Caco-2 (cell line): ENCODE measurements at regions of chr12 and their contacts with region 1.

Region 1: GRCh38 chr12:6752921-6753771 is at the start of gene MLF2:
- DNase-seq: peak; percentile 99 to 100
- H3K4me3 ChIP-seq: peak within 1 kb of the TSS; percentile 97
- H3K4me3 Mint-ChIP-seq: peak within 1 kb of the TSS; percentile 90
- H3K27ac Mint-ChIP-seq: peak within 1 kb of the TSS; percentile 94
- H3K4me1 ChIP-seq: peaks cover 16% of the 10 kb centered on the region
- H3K4me1 Mint-ChIP-seq: peaks cover 11% of the 10 kb centered on the region
- H3K27me3 ChIP-seq: no peaks in the 10 kb centered on the region
- H3K27me3 Mint-ChIP-seq: no peaks in the 10 kb centered on the region
- CTCF ChIP-seq: peak; percentile 99
- total RNA-seq, gene MLF2: 303 and 309 TPM in 2 replicates

Region 2: GRCh38 chr12:6723607-6724396 is 29.3 kb before region 1 on chr12 and contains the start of gene COPS7A:
- CTCF ChIA-PET with region 1: interaction called, 44 read pairs
- POLR2A ChIA-PET with region 1: interaction called, 60 read pairs
- intact Hi-C with region 1: loop called (anchors 1 kb)
- DNase-seq: peak; percentile 100
- H3K4me3 ChIP-seq: peak within 1 kb of the TSS; percentile 63
- H3K4me3 Mint-ChIP-seq: peak within 1 kb of the TSS; percentile 73
- H3K27ac Mint-ChIP-seq: peak within 1 kb of the TSS; percentile 80
- H3K4me1 ChIP-seq: peaks cover 11% of the 10 kb centered on the region; the same call in 1 of the 2 replicates
- H3K4me1 Mint-ChIP-seq: peaks cover 11% of the 10 kb centered on the region
- H3K27me3 ChIP-seq: no peaks in the 10 kb centered on the region
- H3K27me3 Mint-ChIP-seq: no peaks in the 10 kb centered on the region
- CTCF ChIP-seq: no peak
- total RNA-seq, gene COPS7A: 56.8 and 61.9 TPM in 2 replicates

Region 3: GRCh38 chr12:6764011-6764828 is 11.1 kb after region 1 on chr12:
- CTCF ChIA-PET with region 1: interaction called, 135 read pairs
- POLR2A ChIA-PET with region 1: interaction called, 42 read pairs
- intact Hi-C with region 1: loop called (anchors 1 kb)
- DNase-seq: peak; percentile 89 to 95
- H3K4me3 ChIP-seq: peak overlapping the region; percentile 10; the same call in 1 of the 2 replicates
- H3K4me3 Mint-ChIP-seq: peak overlapping the region; percentile 71
- H3K27ac Mint-ChIP-seq: peak overlapping the region; percentile 79
- H3K4me1 ChIP-seq: peaks cover 54% of the 10 kb centered on the region
- H3K4me1 Mint-ChIP-seq: peaks cover 53% of the 10 kb centered on the region
- H3K27me3 ChIP-seq: no peaks in the 10 kb centered on the region
- H3K27me3 Mint-ChIP-seq: no peaks in the 10 kb centered on the region
- CTCF ChIP-seq: no peak

Region 4: DNA sequence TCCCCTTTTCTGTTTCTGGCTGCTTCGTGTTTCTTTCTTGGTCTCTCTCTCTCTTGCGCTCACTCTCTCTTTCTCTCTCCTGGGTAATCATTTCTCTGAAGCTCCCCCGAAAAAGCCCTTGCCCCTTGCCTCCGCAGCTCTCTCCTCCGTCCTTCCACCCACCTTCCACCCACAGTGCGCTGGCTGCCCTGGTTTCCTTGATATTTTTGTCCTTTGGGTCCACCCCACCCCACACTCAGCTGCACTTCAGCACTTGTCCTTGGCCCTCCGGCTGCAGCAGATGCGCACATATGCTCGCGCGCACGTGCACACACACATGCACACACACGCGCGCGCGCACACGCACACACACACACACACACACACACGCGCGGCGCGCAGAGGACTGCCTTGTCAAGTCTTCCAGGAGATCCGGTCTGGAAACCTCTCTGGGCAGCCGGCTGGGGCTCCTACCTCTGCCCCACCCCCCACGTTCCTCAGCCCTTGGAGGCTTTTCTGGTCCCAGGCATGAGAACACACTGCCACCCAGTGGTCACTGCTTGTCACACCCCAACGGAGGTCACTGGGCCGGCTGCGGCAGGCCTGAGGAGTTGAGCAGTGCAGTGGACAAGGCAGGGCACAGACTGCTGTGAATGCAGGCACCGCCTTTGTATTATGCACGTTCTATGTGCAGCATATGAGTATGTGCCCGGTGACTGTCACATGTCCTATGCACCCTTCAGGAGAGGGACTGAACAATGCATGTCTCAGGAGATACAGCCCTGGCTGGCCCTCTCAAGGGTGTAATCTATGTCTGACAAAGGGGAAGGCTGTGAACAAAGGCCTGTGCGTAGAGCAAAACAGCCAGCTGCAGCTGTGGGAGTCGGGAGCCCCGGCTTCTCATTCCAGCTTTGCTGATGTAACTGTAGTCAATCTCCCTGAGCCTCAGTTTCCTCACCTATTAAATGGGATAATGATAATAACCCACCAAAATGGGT is 25.7 kb after region 1 on chr12:
- CTCF ChIA-PET with region 1: interaction called, 51 read pairs
- POLR2A ChIA-PET with region 1: interaction called, 20 read pairs
- intact Hi-C with region 1: loop called (anchors 1 kb)
- DNase-seq: peak; percentile 98 to 99
- H3K4me3 ChIP-seq: peak overlapping the region; percentile 44
- H3K4me3 Mint-ChIP-seq: peak overlapping the region; percentile 81
- H3K27ac Mint-ChIP-seq: peak overlapping the region; percentile 58
- H3K4me1 ChIP-seq: peaks cover 31% of the 10 kb centered on the region
- H3K4me1 Mint-ChIP-seq: peaks cover 43% of the 10 kb centered on the region
- H3K27me3 ChIP-seq: no peaks in the 10 kb centered on the region
- H3K27me3 Mint-ChIP-seq: no peaks in the 10 kb centered on the region
- CTCF ChIP-seq: peak; percentile 99

Region 5: DNA sequence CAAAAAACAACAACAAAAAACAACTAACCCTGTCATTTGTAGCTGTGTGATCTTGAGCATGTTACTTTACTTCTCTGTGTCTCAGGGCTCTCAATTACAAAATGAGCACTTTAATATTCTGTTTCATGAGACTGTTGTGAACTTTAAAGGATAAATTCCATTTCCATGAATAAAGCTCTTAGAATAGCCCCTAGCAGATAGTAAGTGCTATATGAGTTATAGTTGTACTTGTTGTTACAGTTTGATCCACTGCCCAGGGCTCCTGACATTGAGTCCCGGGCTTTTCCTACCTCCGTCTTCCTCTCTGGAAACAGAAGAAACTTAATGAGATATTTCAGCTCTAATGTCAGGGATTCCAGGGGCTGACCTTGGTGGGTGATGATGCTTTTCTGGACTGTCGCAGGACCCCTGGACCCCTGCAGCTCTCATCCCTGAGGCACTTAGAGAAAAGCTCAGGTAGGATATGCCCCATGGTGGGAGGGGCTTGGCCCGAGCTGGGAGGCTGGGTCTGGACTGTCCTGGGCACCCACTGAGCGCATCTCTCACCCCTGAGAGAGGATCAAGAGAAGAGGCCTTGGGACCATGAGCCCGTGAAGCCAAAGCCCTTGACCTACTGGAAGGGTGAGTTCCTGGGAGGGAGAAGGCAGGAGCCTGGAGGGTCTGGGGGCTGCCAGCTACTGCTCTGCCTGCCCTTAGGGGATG is 80.2 kb after region 1 on chr12:
- CTCF ChIA-PET with region 1: interaction called, 35 read pairs
- POLR2A ChIA-PET with region 1: no interaction called
- intact Hi-C with region 1: loop called (anchors 2 kb)
- DNase-seq: no peak
- H3K4me3 ChIP-seq: no peak overlapping the region
- H3K4me3 Mint-ChIP-seq: no peak overlapping the region
- H3K27ac Mint-ChIP-seq: no peak overlapping the region
- H3K4me1 ChIP-seq: peaks cover 14% of the 10 kb centered on the region
- H3K4me1 Mint-ChIP-seq: peaks cover 21% of the 10 kb centered on the region
- H3K27me3 ChIP-seq: no peaks in the 10 kb centered on the region; the same call in 1 of the 2 replicates
- H3K27me3 Mint-ChIP-seq: no peaks in the 10 kb centered on the region
- CTCF ChIP-seq: no peak

Region 6: DNA sequence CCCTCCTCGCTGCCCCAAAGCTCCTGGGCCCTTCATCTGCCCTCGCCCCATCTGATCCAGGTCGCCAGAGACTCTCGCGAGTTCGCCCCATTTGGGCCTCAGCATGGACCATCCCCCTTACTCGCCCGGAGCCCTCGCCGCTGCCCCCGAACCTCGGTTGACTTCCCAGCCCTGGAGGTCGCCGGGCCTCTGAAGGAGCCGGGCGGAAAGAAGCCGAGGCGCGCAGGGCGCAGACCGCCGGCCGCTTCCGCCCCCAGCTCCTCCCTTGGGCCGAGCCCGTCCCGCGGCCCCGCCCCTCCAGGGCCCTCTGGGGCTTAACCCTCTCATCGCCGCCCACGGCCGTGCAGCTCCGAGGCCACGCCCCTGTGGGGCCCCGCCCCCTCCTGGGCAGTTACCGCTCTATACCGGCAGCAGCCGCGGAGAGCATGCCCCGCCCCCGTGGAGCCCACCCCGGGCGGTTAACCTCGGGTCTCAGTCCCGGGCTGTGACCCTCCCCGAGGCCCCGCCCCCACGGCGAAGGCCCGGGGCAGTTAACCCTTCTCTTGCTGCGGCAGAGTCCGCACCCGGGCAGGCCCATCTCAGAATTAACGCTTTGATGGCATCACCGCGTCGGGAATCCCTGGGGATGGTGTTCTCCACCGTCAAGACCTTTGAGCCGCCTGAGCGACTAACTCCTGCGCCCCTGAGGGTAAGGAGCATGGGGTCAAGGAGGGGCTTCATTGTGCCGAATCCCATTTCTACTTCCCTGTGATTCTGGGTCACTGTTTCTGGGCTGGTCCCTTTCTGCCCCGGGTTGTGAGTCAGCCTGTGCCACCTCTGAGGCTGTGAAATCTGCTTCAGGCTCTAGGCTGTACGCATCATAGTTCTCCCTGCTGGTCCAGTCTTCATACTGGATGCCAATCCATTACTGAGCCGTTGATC is 120.2 kb after region 1 on chr12 and contains the start of gene SPSB2:
- CTCF ChIA-PET with region 1: interaction called, 11 read pairs
- POLR2A ChIA-PET with region 1: interaction called, 3 read pairs
- intact Hi-C with region 1: no loop called
- DNase-seq: peak; percentile 100
- H3K4me3 ChIP-seq: peak within 1 kb of the TSS; percentile 89
- H3K4me3 Mint-ChIP-seq: peak within 1 kb of the TSS; percentile 98
- H3K27ac Mint-ChIP-seq: peak within 1 kb of the TSS; percentile 95
- H3K4me1 ChIP-seq: peaks cover 26% of the 10 kb centered on the region
- H3K4me1 Mint-ChIP-seq: peaks cover 47% of the 10 kb centered on the region
- H3K27me3 ChIP-seq: no peaks in the 10 kb centered on the region
- H3K27me3 Mint-ChIP-seq: no peaks in the 10 kb centered on the region
- CTCF ChIP-seq: no peak
- total RNA-seq, gene SPSB2: 23.7 and 24.7 TPM in 2 replicates